PC-9 (cell line): ENCODE measurements at regions of chr6 and their contacts with region 1.

Region 1: DNA sequence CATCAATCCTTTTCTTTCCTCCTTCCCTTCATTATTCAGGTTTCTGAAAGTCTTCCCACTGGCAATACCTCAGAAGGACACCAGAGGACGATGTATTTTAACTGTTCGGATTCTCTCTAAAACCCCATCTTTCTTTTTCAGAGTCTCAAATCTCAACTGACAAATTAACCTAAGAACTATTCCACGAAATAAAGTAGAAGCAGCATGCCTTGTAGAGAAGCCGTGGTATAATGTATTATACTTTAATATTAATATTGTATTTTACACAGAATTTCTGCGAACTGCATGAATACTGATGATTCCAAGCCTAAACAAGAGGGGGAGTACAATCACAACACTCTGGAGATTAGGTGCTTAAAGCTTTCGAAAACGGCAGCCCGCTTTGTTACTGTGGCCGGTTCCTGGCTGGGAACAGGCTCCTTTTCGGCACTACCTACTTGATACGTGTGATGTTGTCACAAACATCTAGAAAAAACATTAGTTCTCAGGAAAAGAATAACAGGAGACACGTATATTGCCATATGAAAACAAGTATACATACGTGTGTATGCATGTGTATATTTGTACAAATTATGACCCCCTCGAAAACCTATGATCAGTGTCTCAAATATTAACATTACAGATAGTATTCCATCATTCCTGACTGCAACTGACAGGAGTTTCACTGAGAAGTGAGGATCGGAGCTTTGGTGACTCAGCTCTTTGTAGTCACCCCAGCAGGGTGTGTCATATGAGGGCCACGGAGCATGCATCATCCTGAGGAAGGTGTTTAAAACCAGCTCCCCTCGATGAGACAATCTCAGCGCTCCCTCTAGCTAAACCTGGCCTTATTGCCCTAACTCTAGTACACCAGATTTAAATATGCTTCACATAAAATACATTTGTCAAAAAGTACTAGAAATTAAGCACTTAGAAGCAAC is 319.7 kb upstream of the TCF21 start:
- DNase-seq: peak; percentile 68 to 88
- H3K4me3 ChIP-seq: peak overlapping the region; percentile 57
- H3K27ac ChIP-seq: peak overlapping the region; percentile 92
- H3K4me1 ChIP-seq: peaks cover 12% of the 10 kb centered on the region
- H3K27me3 ChIP-seq: no peaks in the 10 kb centered on the region
- CTCF ChIP-seq: peak; percentile 99

Region 2: GRCh38 chr6:133326584-133326983 is 242.6 kb before region 1 on chr6:
- CTCF ChIA-PET with region 1: no interaction called
- POLR2A ChIA-PET with region 1: no interaction called
- intact Hi-C with region 1: no loop called
- DNase-seq: no peak
- H3K4me3 ChIP-seq: no peak overlapping the region
- H3K27ac ChIP-seq: no peak overlapping the region
- H3K4me1 ChIP-seq: no peaks in the 10 kb centered on the region
- H3K27me3 ChIP-seq: no peaks in the 10 kb centered on the region
- CTCF ChIP-seq: no peak

Region 3: GRCh38 chr6:133609404-133610270 is 40.4 kb after region 1 on chr6:
- CTCF ChIA-PET with region 1: no interaction called
- POLR2A ChIA-PET with region 1: no interaction called
- intact Hi-C with region 1: loop called (anchors 1 kb)
- DNase-seq: peak; percentile 62 to 96
- H3K4me3 ChIP-seq: no peak overlapping the region
- H3K27ac ChIP-seq: peak overlapping the region; percentile 87
- H3K4me1 ChIP-seq: peaks cover 28% of the 10 kb centered on the region
- H3K27me3 ChIP-seq: no peaks in the 10 kb centered on the region
- CTCF ChIP-seq: no peak

Region 4: GRCh38 chr6:133748628-133749027 is 179.4 kb after region 1 on chr6:
- CTCF ChIA-PET with region 1: no interaction called
- POLR2A ChIA-PET with region 1: interaction called, 20 read pairs
- intact Hi-C with region 1: loop called (anchors 1 kb)
- DNase-seq: no peak
- H3K4me3 ChIP-seq: no peak overlapping the region
- H3K27ac ChIP-seq: no peak overlapping the region
- H3K4me1 ChIP-seq: peaks cover 21% of the 10 kb centered on the region
- H3K27me3 ChIP-seq: no peaks in the 10 kb centered on the region
- CTCF ChIP-seq: no peak

Region 5: GRCh38 chr6:133837801-133838349 is 268.6 kb after region 1 on chr6:
- CTCF ChIA-PET with region 1: interaction called, 11 read pairs
- POLR2A ChIA-PET with region 1: no interaction called
- intact Hi-C with region 1: loop called (anchors 1 kb)
- DNase-seq: peak; percentile 55 to 84
- H3K4me3 ChIP-seq: peak overlapping the region; percentile 61
- H3K27ac ChIP-seq: peak overlapping the region; percentile 76
- H3K4me1 ChIP-seq: no peaks in the 10 kb centered on the region; the same call in 1 of the 2 replicates
- H3K27me3 ChIP-seq: no peaks in the 10 kb centered on the region
- CTCF ChIP-seq: peak; percentile 98

Region 6: DNA sequence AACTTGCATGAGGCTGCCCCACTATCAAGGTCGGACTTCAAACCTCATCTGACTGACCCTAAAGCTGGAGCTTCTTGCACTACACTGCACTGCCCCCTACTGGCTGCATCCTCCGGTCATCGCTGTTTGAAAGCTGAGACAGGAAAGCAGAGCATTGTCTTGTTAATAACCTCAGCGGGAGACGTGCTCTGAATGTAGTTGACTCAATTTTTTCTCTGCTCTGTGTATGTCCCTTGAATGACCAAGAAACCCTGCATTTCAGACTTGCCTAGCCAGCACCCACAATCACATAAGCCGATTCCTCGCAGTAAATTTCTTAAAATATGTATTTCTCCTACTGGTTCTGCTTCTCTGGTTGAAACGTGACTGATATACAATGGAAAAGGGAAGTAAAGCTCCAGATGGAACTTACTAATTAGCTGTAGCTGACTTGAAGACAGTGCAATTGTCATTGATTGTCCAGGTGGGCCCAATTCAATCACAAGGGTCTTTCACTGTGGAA is 347.5 kb after region 1 on chr6:
- CTCF ChIA-PET with region 1: interaction called, 52 read pairs
- POLR2A ChIA-PET with region 1: no interaction called
- intact Hi-C with region 1: loop called (anchors 1 kb)
- DNase-seq: peak; percentile 71 to 82
- H3K4me3 ChIP-seq: peak overlapping the region; percentile 6; the same call in 1 of the 2 replicates
- H3K27ac ChIP-seq: no peak overlapping the region
- H3K4me1 ChIP-seq: no peaks in the 10 kb centered on the region
- H3K27me3 ChIP-seq: no peaks in the 10 kb centered on the region
- CTCF ChIP-seq: peak; percentile 100